ENCODE measurements at regions of chr20 and their contacts with region 1.

Region 1: GRCh38 chr20:62652051-62652926 is 10.0 kb downstream of the SLCO4A1 start:
- DNase-seq: peak; percentile 92
- CTCF ChIP-seq: no peak

Region 2: GRCh38 chr20:61699495-61700374 is 952.6 kb before region 1 on chr20:
- CTCF ChIA-PET with region 1: no interaction called
- POLR2A ChIA-PET with region 1: no interaction called
- DNase-seq: no peak
- CTCF ChIP-seq: no peak

Region 3: GRCh38 chr20:62258499-62259293 is 393.6 kb before region 1 on chr20:
- CTCF ChIA-PET with region 1: no interaction called
- POLR2A ChIA-PET with region 1: no interaction called
- DNase-seq: no peak
- CTCF ChIP-seq: no peak

Region 4: DNA sequence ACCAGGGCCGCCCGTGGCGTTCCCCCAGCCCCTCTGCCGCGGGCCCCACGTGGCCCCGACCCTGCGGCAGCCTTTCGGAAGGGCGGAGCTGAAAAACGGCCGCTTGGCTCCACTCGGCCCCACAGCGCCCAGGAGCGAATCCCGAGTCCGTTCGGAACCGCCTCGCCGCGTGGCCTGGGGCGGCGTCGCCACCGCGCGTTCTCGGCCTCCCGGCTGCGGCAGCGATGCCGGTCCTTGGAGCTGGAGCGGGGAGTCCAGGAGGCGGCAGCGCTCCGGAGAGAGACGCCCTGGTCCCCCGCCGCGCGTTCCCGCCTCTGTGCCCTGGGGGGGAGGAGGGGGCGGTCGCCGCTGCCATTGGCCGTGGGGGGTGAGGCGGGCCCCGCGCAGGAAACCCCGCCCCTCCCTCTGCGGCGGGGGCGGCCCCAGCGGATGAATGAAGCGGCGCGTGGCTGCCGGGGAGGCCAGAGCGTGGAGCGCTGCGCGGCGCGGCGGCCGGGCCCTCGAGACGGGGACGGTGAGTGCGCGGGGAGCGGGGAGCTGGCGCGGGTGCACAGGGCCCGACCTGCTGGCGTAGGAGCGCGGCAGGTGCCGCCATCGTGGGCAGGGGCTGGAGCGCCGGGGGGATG is 10.1 kb before region 1 on chr20 and contains the start of gene SLCO4A1:
- CTCF ChIA-PET with region 1: interaction called, 4 read pairs
- POLR2A ChIA-PET with region 1: interaction called, 14 read pairs
- DNase-seq: peak; percentile 94
- CTCF ChIP-seq: no peak

Region 5: GRCh38 chr20:62766714-62767113 is 114.4 kb after region 1 on chr20:
- CTCF ChIA-PET with region 1: no interaction called
- POLR2A ChIA-PET with region 1: no interaction called
- DNase-seq: no peak
- CTCF ChIP-seq: no peak

Region 6: GRCh38 chr20:62914970-62915457 is 262.7 kb after region 1 on chr20:
- CTCF ChIA-PET with region 1: no interaction called
- POLR2A ChIA-PET with region 1: no interaction called
- DNase-seq: no peak
- CTCF ChIP-seq: no peak